B cell (primary cell): ENCODE measurements at regions of chr13 and their contacts with region 1.

Region 1: DNA sequence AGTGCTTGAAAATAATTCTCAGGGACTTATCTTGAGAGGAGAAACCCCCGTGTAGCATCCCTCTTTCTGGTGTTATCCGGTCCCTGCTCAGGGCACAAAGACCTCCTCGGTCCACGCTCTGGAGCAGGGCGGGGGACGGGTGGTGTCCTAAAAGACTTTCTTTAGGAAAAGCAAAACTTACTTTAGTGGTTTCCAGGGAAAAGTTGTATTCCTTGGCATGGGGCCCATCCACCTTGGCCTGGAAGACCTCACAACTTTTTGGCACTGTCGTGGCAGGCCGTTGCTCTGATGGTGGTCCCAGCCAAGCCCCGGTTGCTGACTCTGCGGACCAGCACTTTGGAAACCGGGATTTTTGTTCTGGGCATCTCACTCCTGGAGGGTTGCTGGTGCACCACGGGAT is 2.7 kb downstream of the AMER2 start:
- DNase-seq: no peak
- ATAC-seq: no peak
- H3K4me3 ChIP-seq: no peak overlapping the region
- H3K4me3 Mint-ChIP-seq: peak overlapping the region; percentile 15
- H3K27ac ChIP-seq: no peak overlapping the region
- H3K27ac Mint-ChIP-seq: no peak overlapping the region
- H3K4me1 ChIP-seq: peaks cover 7 to 13% of the 10 kb centered on the region in 2 donors
- H3K4me1 Mint-ChIP-seq: peaks cover 11% of the 10 kb centered on the region
- H3K27me3 ChIP-seq: peaks cover 0 to 33% (median 22%) of the 10 kb centered on the region in 4 experiments
- H3K27me3 Mint-ChIP-seq: peaks cover 58% of the 10 kb centered on the region
- CTCF ChIP-seq: no peak

Region 2: DNA sequence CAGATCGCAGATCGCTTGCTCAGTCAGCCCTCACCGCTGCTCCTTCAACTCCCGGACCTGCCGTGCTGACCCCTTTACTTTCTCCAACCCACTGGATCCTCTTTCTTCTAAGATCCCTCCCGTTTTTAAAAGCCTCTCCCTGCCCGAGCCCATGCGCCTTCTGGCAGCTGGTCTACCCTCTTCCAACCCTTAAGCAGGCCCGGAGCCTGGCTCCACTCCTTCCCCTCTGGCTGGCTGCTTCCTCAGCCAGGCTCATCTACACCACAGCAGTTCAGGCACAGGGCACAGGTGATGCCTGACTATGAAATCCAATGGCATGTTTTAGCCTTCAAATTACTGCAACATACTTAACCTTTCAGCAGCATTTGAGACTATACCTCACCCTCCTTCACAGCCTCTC is 137.2 kb before region 1 on chr13:
- CTCF ChIA-PET with region 1: no interaction called
- POLR2A ChIA-PET with region 1: no interaction called
- intact Hi-C with region 1: loop called (anchors 5 kb)
- DNase-seq: no peak
- ATAC-seq: no peak
- H3K4me3 ChIP-seq: no peak overlapping the region
- H3K4me3 Mint-ChIP-seq: no peak overlapping the region
- H3K27ac ChIP-seq: no peak overlapping the region
- H3K27ac Mint-ChIP-seq: no peak overlapping the region
- H3K4me1 ChIP-seq: peaks cover 4 to 6% of the 10 kb centered on the region in 2 donors
- H3K4me1 Mint-ChIP-seq: peaks cover 5% of the 10 kb centered on the region
- H3K27me3 ChIP-seq: peaks cover 0 to 8% (median 2%) of the 10 kb centered on the region in 4 experiments
- H3K27me3 Mint-ChIP-seq: peaks cover 58% of the 10 kb centered on the region
- CTCF ChIP-seq: no peak

Region 3: DNA sequence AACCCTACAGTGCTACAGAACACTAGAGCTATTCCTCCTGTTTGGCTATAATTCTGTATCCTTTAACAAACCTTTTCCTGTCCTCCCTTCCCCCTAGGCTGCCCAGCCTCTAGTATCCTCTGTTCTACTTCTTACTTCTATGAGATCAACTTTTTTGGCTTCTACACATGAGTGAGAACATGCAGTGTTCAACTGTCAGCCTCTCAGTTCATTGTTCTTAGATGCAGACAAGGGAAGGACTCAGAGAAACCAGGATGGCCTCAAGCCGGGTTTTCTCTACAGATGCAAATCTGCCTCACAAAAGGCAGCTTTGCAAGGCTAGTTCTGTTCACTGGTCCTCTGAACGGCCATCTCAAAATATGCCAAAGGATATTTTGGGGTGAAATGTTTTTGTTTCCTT is 15.6 kb before region 1 on chr13:
- CTCF ChIA-PET with region 1: no interaction called
- POLR2A ChIA-PET with region 1: no interaction called
- intact Hi-C with region 1: no loop called
- DNase-seq: no peak
- ATAC-seq: no peak
- H3K4me3 ChIP-seq: no peak overlapping the region
- H3K4me3 Mint-ChIP-seq: no peak overlapping the region
- H3K27ac ChIP-seq: no peak overlapping the region
- H3K27ac Mint-ChIP-seq: no peak overlapping the region
- H3K4me1 ChIP-seq: no peaks in the 10 kb centered on the region
- H3K4me1 Mint-ChIP-seq: no peaks in the 10 kb centered on the region
- H3K27me3 ChIP-seq: no peaks in the 10 kb centered on the region
- H3K27me3 Mint-ChIP-seq: peaks cover 6% of the 10 kb centered on the region
- CTCF ChIP-seq: no peak